H1 (cell line): ENCODE measurements at regions of chr7 and their contacts with region 1.

Region 1: GRCh38 chr7:77247206-77247850 is 47.7 kb upstream of the FGL2 start:
- DNase-seq: peak; percentile 56 to 92
- H3K4me3 ChIP-seq: no peak overlapping the region
- H3K27ac ChIP-seq: no peak overlapping the region
- H3K4me1 ChIP-seq: peaks cover 0 to 3% (median under 1%) of the 10 kb centered on the region in 4 experiments; a peak in 4 of 7 replicates
- H3K27me3 ChIP-seq: no peaks in the 10 kb centered on the region
- CTCF ChIP-seq: peak in 2 of 3 experiments; percentile 69 to 71; a peak in 3 of 4 replicates
- EP300 ChIP-seq: no peak
- POLR2A ChIP-seq: no peak
- RAD21 ChIP-seq: peak; percentile 87 to 89

Region 2: GRCh38 chr7:77258014-77258413 is 10.7 kb after region 1 on chr7:
- CTCF ChIA-PET with region 1: interaction called, 23 read pairs
- POLR2A ChIA-PET with region 1: no interaction called
- DNase-seq: no peak
- H3K4me3 ChIP-seq: no peak overlapping the region
- H3K27ac ChIP-seq: no peak overlapping the region
- H3K4me1 ChIP-seq: no peaks in the 10 kb centered on the region
- H3K27me3 ChIP-seq: no peaks in the 10 kb centered on the region
- CTCF ChIP-seq: no peak
- EP300 ChIP-seq: no peak
- POLR2A ChIP-seq: no peak
- RAD21 ChIP-seq: no peak

Region 3: DNA sequence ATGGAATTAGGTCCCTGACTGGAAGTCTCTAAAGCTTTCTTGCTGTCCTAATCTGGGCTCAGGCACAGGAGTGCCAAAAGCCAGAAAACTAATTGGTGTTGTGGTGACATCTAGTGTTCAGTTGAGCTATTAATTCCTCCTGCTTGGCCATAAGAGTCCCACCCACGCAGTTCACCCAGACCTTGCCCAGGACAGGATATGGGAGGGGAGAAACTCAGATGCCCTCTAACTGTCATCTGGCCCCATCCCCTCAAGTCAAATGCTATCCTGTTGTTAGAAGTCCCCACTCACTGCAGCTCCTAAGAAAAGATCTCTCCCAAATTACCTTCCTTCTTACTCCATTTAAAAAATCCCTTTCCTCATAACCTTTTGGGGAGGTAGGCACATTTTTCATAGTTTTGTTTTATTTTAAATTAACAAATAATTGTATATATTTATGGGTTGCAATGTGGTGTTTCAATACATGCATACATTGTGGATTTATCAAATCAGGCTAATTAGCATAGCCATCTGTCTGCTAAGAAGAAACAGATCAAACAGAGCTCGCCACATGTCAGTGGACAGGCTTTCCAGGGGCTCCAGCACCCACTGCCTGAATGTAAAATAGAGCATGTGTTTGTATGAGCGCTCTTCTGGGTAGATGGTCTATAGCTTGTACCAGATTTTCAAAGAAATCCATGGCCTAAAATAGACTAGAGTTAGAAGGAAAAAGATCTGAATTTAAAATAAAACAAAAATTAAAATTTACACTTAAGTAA is 84.8 kb after region 1 on chr7:
- CTCF ChIA-PET with region 1: interaction called, 15 read pairs
- POLR2A ChIA-PET with region 1: no interaction called
- DNase-seq: peak in 1 of 2 experiments; percentile 15
- H3K4me3 ChIP-seq: no peak overlapping the region
- H3K27ac ChIP-seq: no peak overlapping the region
- H3K4me1 ChIP-seq: peaks cover 0 to 10% (median 5%) of the 10 kb centered on the region in 4 experiments; a peak in 5 of 7 replicates
- H3K27me3 ChIP-seq: no peaks in the 10 kb centered on the region
- CTCF ChIP-seq: peak; percentile 19 to 77 (median 64)
- EP300 ChIP-seq: no peak
- POLR2A ChIP-seq: no peak
- RAD21 ChIP-seq: peak; percentile 84 to 89